Heart left ventricle (tissue), 16 donors: ENCODE measurements at regions of chr5 and their contacts with region 1.

Region 1: GRCh38 chr5:74919487-74919886 is 53.3 kb upstream of the FAM169A start:
- DNase-seq: no peak
- ATAC-seq: peak in 1 of 4 donors; percentile 55
- H3K4me3 ChIP-seq: no peak overlapping the region
- H3K27ac ChIP-seq: no peak overlapping the region
- H3K4me1 ChIP-seq: no peaks in the 10 kb centered on the region
- H3K27me3 ChIP-seq: peaks cover 0 to 3% (median 0%) of the 10 kb centered on the region in 9 donors
- CTCF ChIP-seq: peak; percentile 23 to 60 (median 48)
- POLR2A ChIP-seq: no peak

Region 2: GRCh38 chr5:74673011-74673790 is 246.3 kb before region 1 on chr5:
- intact Hi-C with region 1: loop called in 7 of 10 experiments (anchors 2 to 10 kb)
- DNase-seq: peak in 1 of 5 donors; percentile 28
- ATAC-seq: peak; percentile 70 to 74 (median 71)
- H3K4me3 ChIP-seq: peak overlapping the region in 9 of 12 donors; percentile 15 to 40 (median 21)
- H3K27ac ChIP-seq: peak overlapping the region in 9 of 12 donors; percentile 22 to 76 (median 55)
- H3K4me1 ChIP-seq: peaks cover 0 to 17% (median 4%) of the 10 kb centered on the region in 12 donors
- H3K27me3 ChIP-seq: no peaks in the 10 kb centered on the region
- CTCF ChIP-seq: peak in 11 of 12 donors; percentile 23 to 59 (median 40)
- POLR2A ChIP-seq: no peak

Region 3: GRCh38 chr5:74953940-74954720 is 34.6 kb after region 1 on chr5:
- intact Hi-C with region 1: no loop called
- DNase-seq: no peak
- ATAC-seq: no peak
- H3K4me3 ChIP-seq: no peak overlapping the region
- H3K27ac ChIP-seq: no peak overlapping the region
- H3K4me1 ChIP-seq: no peaks in the 10 kb centered on the region
- H3K27me3 ChIP-seq: no peaks in the 10 kb centered on the region
- CTCF ChIP-seq: no peak
- POLR2A ChIP-seq: no peak